KBM-7 (cell line): ENCODE measurements at regions of chr9 and their contacts with region 1.

Region 1: DNA sequence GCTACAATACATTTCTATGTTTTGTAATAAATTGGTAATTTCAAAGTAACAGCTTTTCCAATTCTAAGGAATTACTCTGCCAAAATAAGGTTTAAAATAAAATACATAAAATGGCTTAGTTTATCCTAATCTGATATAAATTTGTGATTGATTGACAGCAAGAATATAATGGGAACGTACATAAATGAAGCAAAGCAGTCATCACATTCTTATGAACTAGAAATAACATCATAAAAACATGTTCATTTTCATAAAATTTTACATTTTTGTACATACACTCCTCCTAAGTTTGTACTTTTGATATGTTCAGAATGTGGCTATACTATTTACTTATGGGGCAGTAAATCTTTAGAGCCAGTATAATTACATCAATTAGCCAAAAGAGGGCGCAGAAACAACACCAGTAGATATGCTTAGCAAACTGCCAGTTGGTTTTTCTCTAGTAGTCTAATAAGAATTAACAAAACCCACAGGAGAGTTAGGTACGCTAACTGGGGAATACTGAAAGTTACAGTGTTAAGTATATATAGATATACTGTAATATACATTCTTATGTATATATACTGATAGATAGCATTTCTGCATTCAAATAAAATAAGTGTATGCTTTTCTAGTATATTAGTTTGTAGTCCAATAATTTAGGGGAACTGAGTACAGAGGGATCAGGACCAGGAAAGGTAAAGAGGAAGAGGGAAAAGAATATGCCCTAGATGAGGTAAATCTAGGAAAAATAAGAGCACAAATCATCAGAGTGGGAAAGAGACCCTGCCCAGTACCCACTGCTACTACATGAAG is 76.8 kb downstream of the ZDHHC21 start:
- DNase-seq: peak; percentile 37

Region 2: GRCh38 chr9:14006386-14007187 is 609.8 kb before region 1 on chr9:
- in situ Hi-C with region 1: no loop called
- DNase-seq: no peak

Region 3: DNA sequence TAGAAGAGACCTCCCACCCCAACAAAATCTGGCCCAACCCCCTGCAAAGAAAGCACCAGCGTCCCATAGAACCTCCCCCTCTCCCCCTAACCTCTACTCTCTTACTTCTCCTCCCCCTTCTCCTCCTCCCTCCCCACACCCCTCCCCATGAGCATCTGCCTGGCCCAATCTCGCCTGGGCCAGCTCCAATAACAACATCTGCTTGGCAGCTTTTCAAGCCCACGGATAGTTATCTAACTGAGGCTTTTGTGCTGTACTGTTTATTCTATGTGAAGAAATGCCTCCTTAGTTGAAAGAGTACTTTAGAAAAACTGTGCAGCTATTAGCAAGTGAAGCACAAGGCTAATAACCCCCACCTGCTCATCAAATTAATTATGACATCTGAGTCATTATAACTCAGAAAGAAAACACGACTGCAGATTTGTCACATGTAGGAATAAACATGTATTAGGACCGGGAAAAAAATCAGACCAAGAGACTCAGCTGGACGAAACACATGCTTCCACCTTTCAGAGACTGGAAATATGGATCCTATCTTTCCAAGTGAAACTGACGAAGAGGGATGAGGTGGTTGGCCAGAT is 345.2 kb before region 1 on chr9:
- in situ Hi-C with region 1: no loop called
- DNase-seq: no peak

Region 4: GRCh38 chr9:14768405-14769229 is 152.2 kb after region 1 on chr9:
- in situ Hi-C with region 1: loop called (anchors 25 kb)
- DNase-seq: peak; percentile 74

Region 5: DNA sequence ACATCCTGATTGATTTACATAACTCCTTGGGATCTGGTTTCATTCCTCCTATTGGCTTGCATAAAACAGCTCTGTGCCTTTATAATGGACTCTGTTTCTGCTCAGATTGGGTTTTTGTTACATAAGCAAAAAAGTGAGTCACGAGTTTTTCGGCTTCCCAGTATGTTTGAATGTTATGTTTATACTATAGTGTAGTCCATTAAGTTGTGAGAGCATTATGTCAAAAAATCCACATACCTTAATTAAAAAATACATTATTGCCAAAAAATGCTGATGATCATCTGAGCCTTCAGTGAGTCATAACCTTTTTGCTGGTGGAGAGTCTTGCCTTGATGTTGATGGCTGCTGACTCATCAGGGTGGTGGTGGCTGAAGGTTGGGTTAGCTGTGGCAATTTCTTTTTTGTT is 1081.1 kb after region 1 on chr9:
- in situ Hi-C with region 1: no loop called
- DNase-seq: no peak